Dendritic cell treated with granulocyte-macrophage colony-stimulating factor and Interleukin-4, amounts not matched to agents 40 ng/mL and 50 ng/mL, for 4 days (primary cell): ENCODE measurements at regions of chr11 and their contacts with region 1.

Region 1: GRCh38 chr11:104609311-104610085 is 288.8 kb downstream of the CASP12 start:
- H3K4me3 Mint-ChIP-seq: no peak overlapping the region
- H3K27ac Mint-ChIP-seq: peak overlapping the region; percentile 83
- H3K4me1 Mint-ChIP-seq: peaks cover 15% of the 10 kb centered on the region
- H3K27me3 Mint-ChIP-seq: no peaks in the 10 kb centered on the region

Region 2: DNA sequence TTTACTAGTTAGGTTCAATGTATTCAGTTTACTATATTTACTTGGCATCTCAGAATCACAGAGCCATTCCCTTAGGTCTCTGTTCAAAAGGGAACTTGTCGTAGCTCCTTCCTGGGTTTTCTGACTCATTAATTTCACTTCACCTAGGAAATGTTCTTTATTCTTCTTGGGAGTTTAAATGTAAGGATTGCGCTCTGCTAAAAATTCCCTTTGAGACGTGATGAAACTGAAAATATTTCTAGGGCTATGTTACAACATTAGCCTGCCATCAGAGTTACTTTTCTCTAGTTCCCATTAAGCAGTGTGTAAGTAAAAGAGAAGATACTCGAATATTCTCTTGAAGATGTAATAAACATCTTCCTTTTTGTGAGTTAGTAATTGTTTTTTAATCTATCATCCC is 79.2 kb after region 1 on chr11:
- intact Hi-C with region 1: loop called (anchors 10 kb)
- H3K4me3 Mint-ChIP-seq: peak overlapping the region; percentile 21
- H3K27ac Mint-ChIP-seq: peak overlapping the region; percentile 32
- H3K4me1 Mint-ChIP-seq: peaks cover 19% of the 10 kb centered on the region
- H3K27me3 Mint-ChIP-seq: no peaks in the 10 kb centered on the region